B cell (primary cell): ENCODE measurements at regions of chr20 and their contacts with region 1.

Region 1: GRCh38 chr20:53926428-53927028 is 143.9 kb downstream of the BCAS1 start:
- DNase-seq: peak; percentile 87
- ATAC-seq: peak; percentile 82
- H3K4me3 ChIP-seq: peak overlapping the region in 3 of 5 experiments; percentile 3 to 13 (median 10)
- H3K4me3 Mint-ChIP-seq: peak overlapping the region; percentile 88
- H3K27ac ChIP-seq: peak overlapping the region; percentile 75 to 83
- H3K27ac Mint-ChIP-seq: peak overlapping the region; percentile 98
- H3K4me1 ChIP-seq: peaks cover 74 to 79% of the 10 kb centered on the region in 2 donors
- H3K4me1 Mint-ChIP-seq: peaks cover 81% of the 10 kb centered on the region
- H3K27me3 ChIP-seq: no peaks in the 10 kb centered on the region
- H3K27me3 Mint-ChIP-seq: no peaks in the 10 kb centered on the region
- CTCF ChIP-seq: no peak

Region 2: GRCh38 chr20:53891306-53891944 is 35.1 kb before region 1 on chr20:
- CTCF ChIA-PET with region 1: interaction called, 3 read pairs
- POLR2A ChIA-PET with region 1: no interaction called
- intact Hi-C with region 1: loop called (anchors 2 kb)
- DNase-seq: no peak
- ATAC-seq: no peak
- H3K4me3 ChIP-seq: no peak overlapping the region
- H3K4me3 Mint-ChIP-seq: no peak overlapping the region
- H3K27ac ChIP-seq: no peak overlapping the region
- H3K27ac Mint-ChIP-seq: peak overlapping the region; percentile 43
- H3K4me1 ChIP-seq: peaks cover 24 to 34% of the 10 kb centered on the region in 2 donors
- H3K4me1 Mint-ChIP-seq: peaks cover 40% of the 10 kb centered on the region
- H3K27me3 ChIP-seq: no peaks in the 10 kb centered on the region
- H3K27me3 Mint-ChIP-seq: no peaks in the 10 kb centered on the region
- CTCF ChIP-seq: no peak

Region 3: DNA sequence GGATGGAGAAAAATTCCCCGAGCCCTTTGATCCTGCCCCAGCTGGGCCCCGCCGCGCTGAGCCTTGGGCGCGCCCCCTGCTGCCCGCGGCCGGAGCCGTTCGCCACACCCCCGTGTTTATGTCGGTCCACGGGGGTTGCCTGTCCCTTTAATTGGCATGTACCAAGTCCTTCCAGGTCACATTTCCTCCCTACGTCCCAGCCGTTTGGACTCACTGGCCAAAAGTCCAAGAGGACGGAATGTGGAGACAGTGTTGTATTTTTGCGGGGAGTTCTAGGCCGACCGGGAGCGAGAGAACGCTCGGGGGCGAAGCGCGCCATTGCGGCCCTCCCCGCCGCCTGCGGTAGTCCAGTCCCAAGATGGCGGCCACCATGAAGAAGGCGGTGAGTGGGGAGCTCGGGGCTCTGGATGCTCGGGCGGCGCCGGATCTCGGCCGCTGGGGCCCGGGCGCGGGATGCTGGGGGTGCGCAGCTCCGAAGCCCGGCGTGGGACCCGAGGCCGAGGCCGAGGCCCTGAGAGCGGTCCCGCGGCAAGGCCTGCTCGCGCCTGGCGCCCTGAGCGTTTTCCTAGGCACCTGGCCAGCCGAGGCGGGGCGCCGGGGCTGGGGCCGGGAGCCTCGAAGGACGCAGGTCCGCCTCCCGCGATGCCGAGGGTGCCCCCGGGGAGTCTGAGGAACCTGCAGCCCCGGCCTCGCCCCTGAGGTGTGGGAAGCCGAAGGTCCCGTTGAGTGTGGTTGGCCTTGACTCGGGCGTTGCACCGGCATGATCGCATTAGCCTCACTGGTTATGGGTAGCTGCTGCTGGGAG is 281.4 kb after region 1 on chr20 and contains the start of gene PFDN4:
- CTCF ChIA-PET with region 1: no interaction called
- POLR2A ChIA-PET with region 1: no interaction called
- intact Hi-C with region 1: loop called (anchors 1 kb)
- DNase-seq: peak; percentile 94
- ATAC-seq: peak; percentile 94
- H3K4me3 ChIP-seq: peak within 1 kb of the TSS; percentile 59 to 94 (median 84)
- H3K4me3 Mint-ChIP-seq: peak within 1 kb of the TSS; percentile 100
- H3K27ac ChIP-seq: peak within 1 kb of the TSS; percentile 92 to 97
- H3K27ac Mint-ChIP-seq: peak within 1 kb of the TSS; percentile 100
- H3K4me1 ChIP-seq: peaks cover 11 to 12% of the 10 kb centered on the region in 2 donors
- H3K4me1 Mint-ChIP-seq: peaks cover 29% of the 10 kb centered on the region
- H3K27me3 ChIP-seq: no peaks in the 10 kb centered on the region
- H3K27me3 Mint-ChIP-seq: no peaks in the 10 kb centered on the region
- CTCF ChIP-seq: peak; percentile 80
- total RNA-seq, gene PFDN4: 16.8 and 18.0 TPM in 2 replicates

Region 4: DNA sequence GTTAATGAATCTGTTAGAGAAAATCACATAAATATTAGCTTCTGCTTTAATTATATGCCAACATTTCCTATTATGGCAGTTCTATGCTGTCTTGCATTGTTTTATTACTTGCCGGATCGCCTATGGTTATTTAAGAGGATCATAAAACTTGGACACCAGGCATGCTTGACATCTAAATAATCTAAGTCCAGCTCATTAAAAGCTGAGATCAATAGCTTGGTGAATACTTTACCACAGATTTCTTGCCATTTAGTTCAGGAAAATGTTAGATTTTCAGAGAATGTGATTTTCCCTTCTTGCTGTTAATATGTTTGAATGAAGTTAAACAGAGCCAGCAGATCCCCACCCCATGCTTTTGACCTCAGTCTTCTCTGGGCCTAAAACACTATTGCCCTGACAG is 400.1 kb after region 1 on chr20:
- CTCF ChIA-PET with region 1: no interaction called
- POLR2A ChIA-PET with region 1: no interaction called
- intact Hi-C with region 1: no loop called
- DNase-seq: no peak
- ATAC-seq: no peak
- H3K4me3 ChIP-seq: no peak overlapping the region
- H3K4me3 Mint-ChIP-seq: no peak overlapping the region
- H3K27ac ChIP-seq: no peak overlapping the region
- H3K27ac Mint-ChIP-seq: no peak overlapping the region
- H3K4me1 ChIP-seq: no peaks in the 10 kb centered on the region
- H3K4me1 Mint-ChIP-seq: no peaks in the 10 kb centered on the region
- H3K27me3 ChIP-seq: no peaks in the 10 kb centered on the region
- H3K27me3 Mint-ChIP-seq: peaks cover 10% of the 10 kb centered on the region
- CTCF ChIP-seq: no peak

Region 5: DNA sequence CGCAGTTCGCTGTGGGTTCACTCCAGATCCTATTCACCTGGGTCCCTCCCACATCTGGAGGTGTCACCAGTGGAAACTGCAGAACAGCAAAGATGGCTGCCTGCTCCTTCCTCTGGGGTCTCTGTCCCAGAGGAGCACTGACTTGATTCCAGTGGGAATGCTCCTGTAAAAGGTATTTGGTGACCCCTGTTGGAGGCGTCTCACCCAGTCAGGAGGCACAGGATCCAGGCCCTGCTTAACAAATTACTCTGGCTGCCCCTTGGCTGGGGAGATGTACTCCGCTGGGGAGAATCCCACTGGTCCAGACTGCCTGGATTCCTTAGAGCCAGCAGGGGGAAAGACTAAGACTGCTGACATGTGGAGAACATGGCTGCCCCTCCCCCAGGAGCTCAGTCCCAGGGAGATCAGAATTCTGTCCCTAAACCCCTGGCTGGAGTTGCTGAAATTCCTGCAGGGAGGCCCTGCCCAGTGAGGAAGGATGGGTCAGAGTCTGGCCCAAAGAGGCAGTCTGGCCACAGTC is 1595.8 kb after region 1 on chr20:
- CTCF ChIA-PET with region 1: no interaction called
- POLR2A ChIA-PET with region 1: no interaction called
- intact Hi-C with region 1: no loop called
- DNase-seq: no peak
- ATAC-seq: no peak
- H3K4me3 ChIP-seq: no peak overlapping the region
- H3K4me3 Mint-ChIP-seq: no peak overlapping the region
- H3K27ac ChIP-seq: no peak overlapping the region
- H3K27ac Mint-ChIP-seq: no peak overlapping the region
- H3K4me1 ChIP-seq: no peaks in the 10 kb centered on the region
- H3K4me1 Mint-ChIP-seq: no peaks in the 10 kb centered on the region
- H3K27me3 ChIP-seq: no peaks in the 10 kb centered on the region
- H3K27me3 Mint-ChIP-seq: no peaks in the 10 kb centered on the region
- CTCF ChIP-seq: no peak